ENCODE measurements at regions of chr18 and their contacts with region 1.

Region 1: GRCh38 chr18:23629444-23629946 is 33.2 kb downstream of the ANKRD29 start:
- DNase-seq: peak; percentile 45
- ATAC-seq: peak; percentile 95
- H3K4me3 ChIP-seq: no peak overlapping the region
- H3K27ac ChIP-seq: no peak overlapping the region
- H3K4me1 ChIP-seq: no peaks in the 10 kb centered on the region
- H3K27me3 ChIP-seq: no peaks in the 10 kb centered on the region
- CTCF ChIP-seq: peak in 2 of 3 experiments; percentile 14 to 47; a peak in 2 of 6 replicates
- EP300 ChIP-seq: no peak
- POLR2A ChIP-seq: no peak
- RAD21 ChIP-seq: peak; percentile 54; the same call in 1 of the 2 replicates

Region 2: DNA sequence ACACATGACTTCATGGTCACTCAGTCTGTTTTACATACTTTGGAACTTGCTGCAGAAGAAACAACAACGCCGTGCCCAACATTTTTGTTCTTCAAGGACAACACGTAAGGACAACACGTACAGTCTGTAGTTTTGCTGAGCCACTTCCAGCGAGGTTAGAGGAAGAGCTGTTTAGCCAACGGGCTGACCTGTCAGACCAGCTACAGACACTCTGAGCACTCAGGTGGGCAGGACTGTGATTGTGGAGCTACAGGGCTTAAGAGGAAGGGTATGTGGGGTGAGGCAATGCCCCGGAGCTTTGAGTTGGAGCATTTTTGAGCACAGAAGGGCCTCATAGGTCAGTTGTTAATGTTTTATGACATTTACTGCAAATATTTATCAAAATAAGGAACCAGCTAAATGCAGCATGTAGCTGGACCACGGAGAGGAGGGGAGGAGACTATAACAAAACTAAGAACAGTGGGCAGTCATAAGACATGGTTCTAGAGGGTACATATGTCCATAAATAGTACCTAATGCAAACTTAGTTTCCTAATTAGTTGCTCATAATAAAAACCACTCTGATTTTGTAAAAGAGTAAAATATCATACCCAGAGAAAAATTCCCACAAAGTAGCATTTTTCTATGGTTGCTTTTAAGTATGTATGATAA is 16.9 kb before region 1 on chr18:
- CTCF ChIA-PET with region 1: interaction called, 22 read pairs
- POLR2A ChIA-PET with region 1: interaction called, 24 read pairs
- RAD21 ChIA-PET with region 1: interaction called, 20 read pairs
- SMC1A ChIA-PET with region 1: interaction called, 38 read pairs
- in situ Hi-C with region 1: no loop called
- intact Hi-C with region 1: no loop called
- DNase-seq: peak; percentile 38
- ATAC-seq: peak; percentile 57
- H3K4me3 ChIP-seq: no peak overlapping the region
- H3K27ac ChIP-seq: no peak overlapping the region
- H3K4me1 ChIP-seq: peaks cover 5% of the 10 kb centered on the region
- H3K27me3 ChIP-seq: no peaks in the 10 kb centered on the region
- CTCF ChIP-seq: no peak
- EP300 ChIP-seq: no peak
- POLR2A ChIP-seq: no peak
- RAD21 ChIP-seq: no peak

Region 3: DNA sequence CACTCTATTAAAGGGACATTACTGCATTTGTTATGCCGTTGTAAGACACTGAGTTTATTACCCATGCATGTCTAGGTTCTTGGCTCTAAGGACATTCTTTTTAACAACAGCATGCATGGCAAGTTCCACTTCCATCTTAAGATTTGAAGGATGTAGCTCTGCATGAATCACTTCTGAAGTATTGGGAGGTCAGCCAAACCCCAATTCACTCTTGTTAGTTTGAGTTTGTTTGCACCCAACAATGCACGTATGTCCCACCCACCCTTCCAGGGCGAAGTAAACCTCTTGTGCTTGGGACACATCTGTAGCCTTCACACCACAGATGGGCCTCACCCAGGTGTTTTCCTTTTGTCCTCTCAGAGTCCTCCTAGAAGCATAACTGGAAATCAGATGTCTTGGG is 54.2 kb after region 1 on chr18:
- CTCF ChIA-PET with region 1: no interaction called
- POLR2A ChIA-PET with region 1: no interaction called
- RAD21 ChIA-PET with region 1: no interaction called
- SMC1A ChIA-PET with region 1: interaction called, 4 read pairs
- in situ Hi-C with region 1: no loop called
- intact Hi-C with region 1: loop called (anchors 2 kb)
- DNase-seq: no peak
- ATAC-seq: peak; percentile 4; the same call in 1 of the 3 replicates
- H3K4me3 ChIP-seq: no peak overlapping the region
- H3K27ac ChIP-seq: no peak overlapping the region
- H3K4me1 ChIP-seq: no peaks in the 10 kb centered on the region
- H3K27me3 ChIP-seq: peaks cover under 1 to 3% of the 10 kb centered on the region in 2 experiments; a peak in 2 of 4 replicates
- CTCF ChIP-seq: no peak
- EP300 ChIP-seq: no peak
- POLR2A ChIP-seq: no peak
- RAD21 ChIP-seq: no peak

Region 4: GRCh38 chr18:23703057-23703986 is 73.8 kb after region 1 on chr18:
- CTCF ChIA-PET with region 1: interaction called, 233 read pairs
- POLR2A ChIA-PET with region 1: no interaction called
- RAD21 ChIA-PET with region 1: interaction called, 148 read pairs
- SMC1A ChIA-PET with region 1: interaction called, 167 read pairs
- in situ Hi-C with region 1: loop called (anchors 5 kb)
- intact Hi-C with region 1: no loop called
- DNase-seq: no peak
- ATAC-seq: peak; percentile 92
- H3K4me3 ChIP-seq: no peak overlapping the region
- H3K27ac ChIP-seq: no peak overlapping the region
- H3K4me1 ChIP-seq: no peaks in the 10 kb centered on the region
- H3K27me3 ChIP-seq: no peaks in the 10 kb centered on the region
- CTCF ChIP-seq: peak; percentile 35 to 79 (median 41); a peak in 5 of 6 replicates
- EP300 ChIP-seq: no peak
- POLR2A ChIP-seq: no peak
- RAD21 ChIP-seq: peak; percentile 95

Region 5: GRCh38 chr18:24014062-24014985 is 384.8 kb after region 1 on chr18 and contains the start of gene TTC39C:
- CTCF ChIA-PET with region 1: no interaction called
- POLR2A ChIA-PET with region 1: no interaction called
- RAD21 ChIA-PET with region 1: no interaction called
- SMC1A ChIA-PET with region 1: interaction called, 4 read pairs
- in situ Hi-C with region 1: no loop called
- intact Hi-C with region 1: loop called (anchors 10 kb)
- DNase-seq: no peak
- ATAC-seq: peak; percentile 66
- H3K4me3 ChIP-seq: peak within 1 kb of the TSS; percentile 88
- H3K27ac ChIP-seq: peak within 1 kb of the TSS; percentile 86
- H3K4me1 ChIP-seq: peaks cover 61% of the 10 kb centered on the region
- H3K27me3 ChIP-seq: no peaks in the 10 kb centered on the region
- CTCF ChIP-seq: no peak
- EP300 ChIP-seq: peak in 1 of 2 experiments; percentile 18; a peak in 1 of 4 replicates
- POLR2A ChIP-seq: peak; percentile 81
- RAD21 ChIP-seq: no peak
- polyA plus RNA-seq, gene TTC39C: 21.1 to 37.2 TPM

Measured in GM12878 (cell line).